Sigmoid colon (tissue), 7 donors: ENCODE measurements at regions of chr11 and their contacts with region 1.

Region 1: GRCh38 chr11:45475173-45475572 is 189.0 kb upstream of the SYT13 start:
- DNase-seq: peak; percentile 10
- H3K4me3 ChIP-seq: no peak overlapping the region
- H3K27ac ChIP-seq: no peak overlapping the region
- H3K4me1 ChIP-seq: no peaks in the 10 kb centered on the region
- H3K27me3 ChIP-seq: peaks cover 0 to under 1% (median 0%) of the 10 kb centered on the region in 3 donors
- CTCF ChIP-seq: no peak
- EP300 ChIP-seq: no peak
- POLR2A ChIP-seq: no peak

Region 2: DNA sequence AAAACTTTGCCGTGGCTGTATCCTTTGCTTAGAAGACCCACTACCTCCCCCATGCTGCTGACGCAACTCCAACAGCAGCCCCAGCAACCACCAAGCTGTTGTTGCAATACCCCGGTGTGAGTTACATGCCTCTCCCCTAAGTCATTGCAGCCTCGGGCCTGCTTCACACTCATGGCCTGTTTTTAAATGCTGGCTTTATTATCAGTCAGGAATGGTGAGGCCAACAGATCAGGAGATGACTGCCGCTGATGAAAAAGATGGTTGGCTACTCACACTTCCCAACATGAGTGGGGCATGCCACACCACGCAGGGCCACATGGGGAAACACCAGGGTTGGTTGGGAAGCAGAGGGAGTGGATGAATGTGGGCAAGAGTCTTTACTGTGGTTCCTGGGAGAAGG is 17.5 kb before region 1 on chr11:
- intact Hi-C with region 1: no loop called
- DNase-seq: no peak
- H3K4me3 ChIP-seq: no peak overlapping the region
- H3K27ac ChIP-seq: no peak overlapping the region
- H3K4me1 ChIP-seq: no peaks in the 10 kb centered on the region
- H3K27me3 ChIP-seq: no peaks in the 10 kb centered on the region
- CTCF ChIP-seq: no peak
- EP300 ChIP-seq: no peak
- POLR2A ChIP-seq: no peak

Region 3: GRCh38 chr11:45527898-45528297 is 52.7 kb after region 1 on chr11:
- intact Hi-C with region 1: no loop called
- DNase-seq: no peak
- H3K4me3 ChIP-seq: no peak overlapping the region
- H3K27ac ChIP-seq: no peak overlapping the region
- H3K4me1 ChIP-seq: no peaks in the 10 kb centered on the region
- H3K27me3 ChIP-seq: peaks cover 0 to 6% (median 6%) of the 10 kb centered on the region in 3 donors
- CTCF ChIP-seq: no peak
- EP300 ChIP-seq: no peak
- POLR2A ChIP-seq: no peak

Region 4: DNA sequence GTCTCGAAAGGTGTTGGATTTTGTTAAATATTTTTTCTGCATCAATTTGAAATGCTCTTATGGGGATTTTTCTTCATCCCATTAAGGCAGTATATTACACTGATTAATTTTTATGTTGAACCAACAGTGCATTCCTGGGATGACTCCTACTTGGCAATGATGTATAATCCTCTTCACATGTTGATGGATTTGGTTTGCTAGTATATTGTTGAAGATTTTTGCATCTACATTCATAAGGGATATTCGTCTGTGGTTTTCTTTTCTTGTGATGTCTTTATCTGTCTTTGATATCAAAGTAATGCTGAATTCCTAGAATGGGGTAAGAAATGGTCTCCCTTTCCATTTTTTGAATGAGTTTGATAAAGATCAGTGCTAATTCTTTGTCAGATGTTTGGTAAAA is 311.1 kb after region 1 on chr11:
- intact Hi-C with region 1: loop called (anchors 5 kb)
- DNase-seq: no peak
- H3K4me3 ChIP-seq: no peak overlapping the region
- H3K27ac ChIP-seq: no peak overlapping the region
- H3K4me1 ChIP-seq: no peaks in the 10 kb centered on the region
- H3K27me3 ChIP-seq: peaks cover 0 to 6% (median 0%) of the 10 kb centered on the region in 3 donors
- CTCF ChIP-seq: no peak
- EP300 ChIP-seq: no peak
- POLR2A ChIP-seq: no peak